Activated T-helper 1 cell treated with anti-CD3 and anti-CD28 coated beads, Interleukin-12 subunit alpha, Interleukin-12 subunit beta, Interleukin-2, Interleukin-4 antibody, amounts not matched to agents 30 ng/mL and 10 ng/mL and 1 ng/mL, durations not matched to agents 14 hours and 24 hours and 36 hours (primary cell): ENCODE measurements at regions of chr1 and their contacts with region 1.

Region 1: DNA sequence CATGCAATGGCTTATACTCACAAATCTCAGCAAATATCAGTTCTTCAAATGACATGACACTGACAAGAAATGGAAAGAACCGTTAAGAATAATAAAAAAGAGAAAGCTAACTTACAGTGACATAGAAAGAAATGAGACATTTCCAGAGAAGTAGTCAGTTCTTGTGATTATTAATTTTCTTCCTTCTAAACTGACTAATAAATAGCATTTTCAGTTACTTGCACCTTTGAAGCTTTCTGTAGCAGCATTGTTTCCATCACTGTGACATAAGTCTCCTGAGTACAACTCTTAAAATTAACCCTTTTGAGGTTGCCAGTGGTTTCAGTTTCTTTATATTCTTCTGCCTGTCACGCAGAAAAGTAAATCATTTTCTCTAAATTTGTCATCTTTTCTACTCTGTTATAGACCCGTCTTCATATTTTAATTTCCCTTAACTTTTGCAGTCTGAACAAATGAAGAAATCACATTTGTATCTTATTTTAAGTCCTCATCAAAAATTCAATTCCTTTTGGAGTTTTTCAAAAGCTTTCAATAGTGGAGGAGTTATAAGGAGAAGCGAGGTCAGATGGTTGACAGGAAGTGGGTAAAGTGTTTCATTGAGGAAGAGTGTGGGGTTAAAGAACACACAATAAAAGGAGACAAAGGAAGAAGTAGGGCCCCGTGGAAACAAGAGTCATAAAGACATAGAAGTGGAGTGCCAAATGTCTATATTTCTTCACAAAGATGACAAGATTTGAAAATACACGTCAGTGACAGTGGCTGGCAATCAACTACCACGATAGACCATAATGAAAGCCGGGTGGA is 57.9 kb upstream of the S1PR1 start:
- DNase-seq: peak; percentile 27
- H3K4me3 Mint-ChIP-seq: peak overlapping the region; percentile 76
- H3K27ac Mint-ChIP-seq: peak overlapping the region; percentile 98
- H3K4me1 Mint-ChIP-seq: peaks cover 65% of the 10 kb centered on the region
- H3K27me3 Mint-ChIP-seq: no peaks in the 10 kb centered on the region

Region 2: GRCh38 chr1:100443811-100444571 is 734.9 kb before region 1 on chr1:
- intact Hi-C with region 1: loop called (anchors 1 kb)
- DNase-seq: peak; percentile 22
- H3K4me3 Mint-ChIP-seq: peak overlapping the region; percentile 61
- H3K27ac Mint-ChIP-seq: peak overlapping the region; percentile 95
- H3K4me1 Mint-ChIP-seq: peaks cover 91% of the 10 kb centered on the region
- H3K27me3 Mint-ChIP-seq: no peaks in the 10 kb centered on the region

Region 3: GRCh38 chr1:100930494-100930893 is 248.4 kb before region 1 on chr1:
- intact Hi-C with region 1: no loop called
- DNase-seq: no peak
- H3K4me3 Mint-ChIP-seq: no peak overlapping the region
- H3K27ac Mint-ChIP-seq: no peak overlapping the region
- H3K4me1 Mint-ChIP-seq: peaks cover 50% of the 10 kb centered on the region
- H3K27me3 Mint-ChIP-seq: no peaks in the 10 kb centered on the region

Region 4: DNA sequence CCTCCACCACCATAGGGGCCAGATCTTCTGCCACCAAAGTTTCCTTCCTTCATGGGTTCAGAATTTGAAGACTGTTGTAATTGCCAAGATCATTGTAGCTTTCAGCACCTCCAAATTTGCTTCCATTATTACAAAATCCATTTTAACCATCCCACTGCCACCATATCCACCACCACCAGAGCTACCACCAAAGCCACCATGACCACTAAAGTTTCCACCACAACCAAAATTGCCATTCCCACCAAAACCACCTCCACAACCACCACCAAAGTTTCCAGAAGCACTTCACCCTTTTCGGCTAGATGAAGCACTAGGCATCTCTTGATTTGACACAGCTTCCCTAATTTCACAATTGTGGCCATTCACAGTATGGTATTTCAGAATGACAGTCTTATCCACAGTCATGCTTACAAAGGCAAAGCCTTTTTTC is 237.8 kb before region 1 on chr1:
- intact Hi-C with region 1: loop called (anchors 1 kb)
- DNase-seq: peak; percentile 17
- H3K4me3 Mint-ChIP-seq: peak overlapping the region; percentile 58
- H3K27ac Mint-ChIP-seq: peak overlapping the region; percentile 99
- H3K4me1 Mint-ChIP-seq: peaks cover 37% of the 10 kb centered on the region
- H3K27me3 Mint-ChIP-seq: peaks cover 3% of the 10 kb centered on the region

Region 5: DNA sequence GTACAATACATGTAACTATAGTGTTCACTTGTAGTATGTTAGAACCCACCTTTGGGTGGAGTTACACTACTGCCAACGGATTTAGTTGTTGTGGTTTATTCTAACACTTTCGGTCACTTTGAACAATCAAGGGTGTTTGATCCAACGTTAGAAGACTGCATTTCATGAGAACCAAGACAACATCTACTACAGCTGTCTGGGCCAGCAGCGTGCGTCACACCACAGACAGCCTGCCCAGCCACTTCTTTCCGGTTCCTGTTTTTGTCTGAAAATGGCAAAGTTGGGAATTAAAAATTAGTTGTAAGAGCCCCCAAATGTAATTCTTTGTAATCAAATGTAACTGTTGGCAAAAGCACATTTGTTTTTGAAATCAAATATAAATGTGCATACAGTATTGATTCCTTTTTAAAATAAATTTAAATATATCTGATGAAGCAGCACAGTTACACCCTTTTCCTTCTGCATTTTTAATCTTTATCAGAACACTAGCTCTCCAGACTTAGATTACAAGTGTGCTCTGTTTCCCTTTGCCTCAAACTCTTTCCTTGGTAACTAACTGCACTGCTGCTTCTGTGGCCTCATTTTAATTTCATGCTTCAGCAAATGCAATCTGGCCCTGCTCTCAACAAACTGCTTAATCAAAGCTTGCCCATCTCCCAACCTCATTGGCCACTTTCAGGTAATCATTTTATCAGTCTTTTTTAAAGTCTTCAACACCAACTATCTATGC is 66.7 kb before region 1 on chr1:
- intact Hi-C with region 1: loop called (anchors 2 kb)
- DNase-seq: peak; percentile 59
- H3K4me3 Mint-ChIP-seq: peak overlapping the region; percentile 47
- H3K27ac Mint-ChIP-seq: peak overlapping the region; percentile 77
- H3K4me1 Mint-ChIP-seq: peaks cover 40% of the 10 kb centered on the region
- H3K27me3 Mint-ChIP-seq: no peaks in the 10 kb centered on the region

Region 6: DNA sequence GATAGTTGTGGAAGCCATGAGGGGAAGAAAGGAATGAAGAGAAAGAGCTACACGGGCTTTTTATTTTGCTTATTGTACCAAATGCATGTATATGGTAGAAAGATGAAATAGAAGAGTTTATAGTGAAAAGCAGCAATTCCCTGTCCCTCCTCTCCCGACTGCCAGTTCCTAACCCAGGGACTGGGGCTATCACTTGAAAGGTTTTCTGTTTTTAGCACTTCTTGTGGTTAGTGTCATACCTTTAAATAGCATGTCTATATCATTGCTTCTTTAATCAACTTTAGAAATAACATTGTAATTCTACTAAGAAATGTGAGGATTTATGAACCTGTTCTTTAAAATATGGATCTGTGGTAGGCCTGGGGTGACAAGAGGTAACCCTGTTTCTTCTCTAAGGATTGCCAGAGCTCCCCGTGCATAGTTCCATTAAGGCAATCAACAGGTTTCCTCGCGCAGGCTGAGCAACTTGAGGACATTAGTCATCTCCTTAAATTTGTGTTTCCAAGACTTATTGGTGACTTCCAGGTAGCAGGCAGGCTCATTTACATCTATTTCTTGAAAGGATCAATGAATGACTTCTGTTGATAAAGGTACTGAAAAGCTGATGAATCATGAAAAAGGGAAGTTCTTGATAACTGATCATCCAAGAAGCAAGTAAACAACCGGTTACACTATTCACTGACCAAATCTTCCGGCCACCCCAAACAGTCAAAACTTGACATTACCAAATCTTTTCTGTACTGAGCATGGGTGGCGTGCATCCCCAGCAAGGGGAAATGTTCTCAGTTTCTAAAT is 20.1 kb after region 1 on chr1:
- intact Hi-C with region 1: loop called (anchors 1 kb)
- DNase-seq: no peak
- H3K4me3 Mint-ChIP-seq: peak overlapping the region; percentile 9
- H3K27ac Mint-ChIP-seq: peak overlapping the region; percentile 85
- H3K4me1 Mint-ChIP-seq: peaks cover 35% of the 10 kb centered on the region
- H3K27me3 Mint-ChIP-seq: no peaks in the 10 kb centered on the region

Region 7: GRCh38 chr1:101371259-101371658 is 192.4 kb after region 1 on chr1:
- intact Hi-C with region 1: loop called (anchors 1 kb)
- DNase-seq: peak; percentile 33
- H3K4me3 Mint-ChIP-seq: peak overlapping the region; percentile 40
- H3K27ac Mint-ChIP-seq: no peak overlapping the region
- H3K4me1 Mint-ChIP-seq: peaks cover 12% of the 10 kb centered on the region
- H3K27me3 Mint-ChIP-seq: peaks cover 14% of the 10 kb centered on the region